Activated CD4-positive, alpha-beta T cell treated with anti-CD3 and anti-CD28 coated beads for 36 hours (primary cell): ENCODE measurements at regions of chr5 and their contacts with region 1.

Region 1: GRCh38 chr5:180831139-180832048 is 28.8 kb upstream of the MGAT1 start:
- DNase-seq: peak; percentile 88
- ATAC-seq: peak; percentile 67
- H3K4me3 Mint-ChIP-seq: peak overlapping the region; percentile 100
- H3K27ac Mint-ChIP-seq: peak overlapping the region; percentile 99
- H3K4me1 Mint-ChIP-seq: peaks cover 44% of the 10 kb centered on the region
- H3K27me3 Mint-ChIP-seq: no peaks in the 10 kb centered on the region

Region 2: GRCh38 chr5:179060116-179061008 is 1771.0 kb before region 1 on chr5 and contains the start of gene ZNF354C:
- CTCF ChIA-PET with region 1: no interaction called
- POLR2A ChIA-PET with region 1: no interaction called
- intact Hi-C with region 1: no loop called
- DNase-seq: peak; percentile 93
- ATAC-seq: peak; percentile 99
- H3K4me3 Mint-ChIP-seq: peak within 1 kb of the TSS; percentile 81
- H3K27ac Mint-ChIP-seq: peak within 1 kb of the TSS; percentile 90
- H3K4me1 Mint-ChIP-seq: peaks cover 16% of the 10 kb centered on the region
- H3K27me3 Mint-ChIP-seq: no peaks in the 10 kb centered on the region
- total RNA-seq, gene ZNF354C: 7.1 to 7.2 TPM

Region 3: DNA sequence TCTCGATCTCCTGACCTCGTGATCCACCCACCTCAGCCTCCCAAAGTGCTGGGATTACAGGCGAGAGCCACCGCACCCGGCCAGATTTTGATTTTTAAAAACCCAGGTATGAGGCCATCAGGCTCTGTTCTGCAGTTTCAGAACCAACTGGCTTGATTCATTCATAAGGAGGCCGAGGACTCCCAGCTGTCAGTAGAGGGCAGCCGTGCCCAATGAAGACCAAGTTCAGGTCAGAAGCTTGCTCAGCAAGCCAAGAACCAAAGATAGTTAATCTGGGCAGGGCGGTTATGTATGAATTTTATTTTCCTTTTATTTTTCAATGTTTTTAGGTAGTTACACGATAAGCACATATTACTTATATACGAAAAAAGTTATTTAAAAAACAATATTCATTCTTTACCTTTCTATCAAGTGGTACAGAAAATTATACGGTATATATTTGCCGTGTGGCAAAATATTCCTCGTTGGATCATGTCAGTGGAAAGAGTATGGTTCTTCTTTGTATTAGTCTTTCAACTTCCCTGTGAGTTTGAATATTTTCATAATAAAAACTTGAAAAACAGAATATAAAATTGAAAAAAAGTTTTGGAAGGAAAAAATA is 46.8 kb before region 1 on chr5:
- CTCF ChIA-PET with region 1: interaction called, 5 read pairs
- POLR2A ChIA-PET with region 1: no interaction called
- intact Hi-C with region 1: loop called (anchors 1 to 10 kb)
- DNase-seq: peak; percentile 86
- ATAC-seq: peak; percentile 74
- H3K4me3 Mint-ChIP-seq: no peak overlapping the region
- H3K27ac Mint-ChIP-seq: no peak overlapping the region
- H3K4me1 Mint-ChIP-seq: peaks cover 22% of the 10 kb centered on the region
- H3K27me3 Mint-ChIP-seq: no peaks in the 10 kb centered on the region

Region 4: GRCh38 chr5:180802325-180803180 is 28.8 kb before region 1 on chr5 and contains the start of gene MGAT1:
- CTCF ChIA-PET with region 1: interaction called, 20 read pairs
- POLR2A ChIA-PET with region 1: interaction called, 11 read pairs
- intact Hi-C with region 1: loop called (anchors 1 kb)
- DNase-seq: peak; percentile 90
- ATAC-seq: peak; percentile 46
- H3K4me3 Mint-ChIP-seq: peak within 1 kb of the TSS; percentile 91
- H3K27ac Mint-ChIP-seq: peak within 1 kb of the TSS; percentile 89
- H3K4me1 Mint-ChIP-seq: peaks cover 77% of the 10 kb centered on the region
- H3K27me3 Mint-ChIP-seq: no peaks in the 10 kb centered on the region
- total RNA-seq, gene MGAT1: 93.2 to 125 TPM

Region 5: GRCh38 chr5:180810210-180810958 is 21.0 kb before region 1 on chr5:
- CTCF ChIA-PET with region 1: interaction called, 4 read pairs
- POLR2A ChIA-PET with region 1: interaction called, 9 read pairs
- intact Hi-C with region 1: loop called (anchors 1 kb)
- DNase-seq: peak; percentile 98
- ATAC-seq: peak; percentile 79
- H3K4me3 Mint-ChIP-seq: peak overlapping the region; percentile 91
- H3K27ac Mint-ChIP-seq: peak overlapping the region; percentile 97
- H3K4me1 Mint-ChIP-seq: peaks cover 72% of the 10 kb centered on the region
- H3K27me3 Mint-ChIP-seq: no peaks in the 10 kb centered on the region

Region 6: DNA sequence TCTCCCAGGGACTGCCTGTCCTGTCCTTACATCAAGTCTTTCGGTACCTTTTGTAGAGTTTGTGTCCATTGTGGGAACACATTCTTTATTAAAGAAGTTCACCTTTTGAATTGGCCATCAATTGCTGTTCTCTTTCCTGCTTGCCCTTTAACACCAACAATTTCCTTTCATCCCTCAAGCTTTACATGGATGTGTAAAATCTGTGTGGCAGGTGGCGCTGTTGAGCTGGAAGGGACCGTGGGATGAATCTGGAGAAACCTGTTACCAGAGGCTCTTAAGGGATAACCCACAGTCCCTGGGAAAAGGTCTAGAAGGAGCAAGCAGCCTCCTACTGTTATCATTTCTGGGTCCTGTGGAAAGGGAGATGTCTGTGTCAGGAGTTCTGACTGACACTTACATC is 37.6 kb after region 1 on chr5:
- CTCF ChIA-PET with region 1: interaction called, 10 read pairs
- POLR2A ChIA-PET with region 1: no interaction called
- intact Hi-C with region 1: no loop called
- DNase-seq: peak; percentile 87
- ATAC-seq: peak; percentile 76
- H3K4me3 Mint-ChIP-seq: no peak overlapping the region
- H3K27ac Mint-ChIP-seq: no peak overlapping the region
- H3K4me1 Mint-ChIP-seq: peaks cover 5% of the 10 kb centered on the region
- H3K27me3 Mint-ChIP-seq: peaks cover 4% of the 10 kb centered on the region

Region 7: GRCh38 chr5:181243512-181244343 is 412.3 kb after region 1 on chr5 and contains the start of gene RACK1:
- CTCF ChIA-PET with region 1: no interaction called
- POLR2A ChIA-PET with region 1: no interaction called
- intact Hi-C with region 1: loop called in 1 of 2 experiments (anchors 5 kb)
- DNase-seq: peak; percentile 94
- ATAC-seq: peak; percentile 70
- H3K4me3 Mint-ChIP-seq: peak within 1 kb of the TSS; percentile 91
- H3K27ac Mint-ChIP-seq: peak within 1 kb of the TSS; percentile 99
- H3K4me1 Mint-ChIP-seq: peaks cover 50% of the 10 kb centered on the region
- H3K27me3 Mint-ChIP-seq: no peaks in the 10 kb centered on the region
- total RNA-seq, gene RACK1: 2,724 to 3,901 TPM